ENCODE measurements at regions of chr7 and their contacts with region 1.

Region 1: GRCh38 chr7:148334959-148335577 is 255.5 kb upstream of the C7orf33 start:
- DNase-seq: no peak
- H3K4me3 ChIP-seq: no peak overlapping the region
- H3K4me3 Mint-ChIP-seq: no peak overlapping the region
- H3K27ac Mint-ChIP-seq: no peak overlapping the region
- H3K4me1 ChIP-seq: peaks cover 25% of the 10 kb centered on the region
- H3K4me1 Mint-ChIP-seq: peaks cover 27% of the 10 kb centered on the region
- H3K27me3 ChIP-seq: no peaks in the 10 kb centered on the region
- H3K27me3 Mint-ChIP-seq: no peaks in the 10 kb centered on the region
- CTCF ChIP-seq: no peak

Region 2: GRCh38 chr7:148270586-148270985 is 64.5 kb before region 1 on chr7:
- CTCF ChIA-PET with region 1: interaction called, 4 read pairs
- POLR2A ChIA-PET with region 1: no interaction called
- intact Hi-C with region 1: loop called (anchors 1 kb)
- DNase-seq: peak; percentile 58 to 66
- H3K4me3 ChIP-seq: no peak overlapping the region
- H3K4me3 Mint-ChIP-seq: peak overlapping the region; percentile 49
- H3K27ac Mint-ChIP-seq: peak overlapping the region; percentile 54
- H3K4me1 ChIP-seq: peaks cover 30% of the 10 kb centered on the region
- H3K4me1 Mint-ChIP-seq: peaks cover 26% of the 10 kb centered on the region
- H3K27me3 ChIP-seq: no peaks in the 10 kb centered on the region
- H3K27me3 Mint-ChIP-seq: no peaks in the 10 kb centered on the region
- CTCF ChIP-seq: no peak

Region 3: DNA sequence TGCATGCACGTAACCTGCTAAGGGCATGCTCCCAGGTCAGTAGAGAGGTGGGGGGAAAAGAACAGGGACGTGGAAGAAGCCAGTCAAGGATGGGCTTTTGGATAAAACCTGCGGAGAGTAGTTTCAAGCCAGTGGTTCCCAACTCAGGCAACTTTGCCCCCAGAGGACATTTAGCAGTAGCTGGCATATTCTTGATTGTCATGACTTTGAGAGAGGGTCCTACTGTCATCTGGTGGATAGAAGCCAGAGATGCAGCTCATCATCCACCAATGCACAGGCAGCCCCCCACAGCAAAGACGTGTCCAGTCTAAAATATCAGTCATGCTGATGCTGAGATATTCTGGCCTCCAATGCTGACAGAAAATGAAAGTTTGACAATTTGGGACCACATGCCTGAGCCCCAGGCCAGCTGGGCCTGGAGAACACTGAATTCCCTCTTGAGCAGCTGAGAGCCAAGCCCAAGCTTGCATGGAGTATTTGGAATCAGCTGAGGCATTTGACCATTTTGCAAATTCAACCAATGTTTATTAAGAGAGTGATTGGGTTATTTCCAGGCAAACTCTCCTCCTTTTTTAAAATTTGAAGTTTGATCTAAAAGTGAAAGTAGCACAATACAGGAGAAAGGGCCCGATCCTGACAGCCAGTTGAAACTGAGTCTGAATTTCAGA is 145.5 kb after region 1 on chr7:
- CTCF ChIA-PET with region 1: no interaction called
- POLR2A ChIA-PET with region 1: no interaction called
- intact Hi-C with region 1: loop called (anchors 5 kb)
- DNase-seq: no peak
- H3K4me3 ChIP-seq: no peak overlapping the region
- H3K4me3 Mint-ChIP-seq: no peak overlapping the region
- H3K27ac Mint-ChIP-seq: peak overlapping the region; percentile 51
- H3K4me1 ChIP-seq: peaks cover 14% of the 10 kb centered on the region
- H3K4me1 Mint-ChIP-seq: peaks cover 36% of the 10 kb centered on the region
- H3K27me3 ChIP-seq: no peaks in the 10 kb centered on the region
- H3K27me3 Mint-ChIP-seq: no peaks in the 10 kb centered on the region
- CTCF ChIP-seq: peak in 1 of 2 experiments; percentile 30